Testis (tissue), 5 donors: ENCODE measurements at regions of chr5 and their contacts with region 1.

Region 1: DNA sequence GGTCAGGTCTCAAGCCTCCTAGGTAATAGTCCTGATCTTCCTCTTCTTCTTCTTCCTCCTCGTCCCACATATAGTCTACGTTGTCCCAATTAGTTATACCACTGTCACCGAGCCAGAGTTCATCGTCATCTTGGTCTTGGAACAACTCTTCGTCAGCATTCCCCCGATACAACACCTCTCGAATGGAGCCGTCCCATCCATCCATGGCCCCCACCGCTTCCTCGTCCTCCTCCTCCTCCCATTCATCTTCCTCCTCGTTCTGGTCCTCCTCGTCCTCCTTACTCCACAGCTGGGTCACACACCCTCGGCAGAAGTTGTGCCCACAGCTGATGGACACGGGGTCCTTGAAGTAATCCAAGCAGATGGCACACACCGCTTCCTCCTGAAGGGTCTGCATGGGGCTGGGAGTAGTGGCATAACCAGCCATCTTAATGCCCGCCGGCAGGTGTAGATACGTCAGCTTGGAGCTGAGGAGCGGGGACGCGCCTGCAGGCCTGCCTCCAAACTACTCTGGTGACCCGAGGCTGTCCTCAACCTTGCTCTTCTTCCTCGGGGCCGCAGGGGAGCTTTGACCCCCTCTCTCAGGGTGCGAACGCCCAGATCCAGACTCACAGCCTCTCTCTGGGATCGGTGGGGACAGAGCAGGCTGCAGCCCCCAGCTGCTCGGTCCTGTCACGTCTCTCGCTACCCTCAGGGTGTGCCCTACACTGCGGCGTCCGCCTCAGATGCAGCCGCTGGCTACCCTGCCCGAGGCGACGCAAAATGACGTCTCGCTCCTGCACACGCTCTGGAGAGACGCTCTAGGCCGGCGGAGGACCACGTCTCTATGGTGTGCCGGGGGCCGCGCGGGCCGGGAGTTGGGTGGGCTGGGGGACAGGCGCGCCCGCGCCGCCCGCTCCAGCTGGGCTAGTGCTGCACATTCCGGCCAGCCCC is at the start of gene TRIM52:
- DNase-seq: peak; percentile 96
- H3K4me3 ChIP-seq: peak within 1 kb of the TSS; percentile 99 to 100
- H3K27ac ChIP-seq: peak within 1 kb of the TSS; percentile 99
- H3K4me1 ChIP-seq: peaks cover 14% of the 10 kb centered on the region
- H3K27me3 ChIP-seq: no peaks in the 10 kb centered on the region
- CTCF ChIP-seq: no peak
- POLR2A ChIP-seq: peak; percentile 40
- total RNA-seq, gene TRIM52: 28.4 to 32.8 TPM

Region 2: DNA sequence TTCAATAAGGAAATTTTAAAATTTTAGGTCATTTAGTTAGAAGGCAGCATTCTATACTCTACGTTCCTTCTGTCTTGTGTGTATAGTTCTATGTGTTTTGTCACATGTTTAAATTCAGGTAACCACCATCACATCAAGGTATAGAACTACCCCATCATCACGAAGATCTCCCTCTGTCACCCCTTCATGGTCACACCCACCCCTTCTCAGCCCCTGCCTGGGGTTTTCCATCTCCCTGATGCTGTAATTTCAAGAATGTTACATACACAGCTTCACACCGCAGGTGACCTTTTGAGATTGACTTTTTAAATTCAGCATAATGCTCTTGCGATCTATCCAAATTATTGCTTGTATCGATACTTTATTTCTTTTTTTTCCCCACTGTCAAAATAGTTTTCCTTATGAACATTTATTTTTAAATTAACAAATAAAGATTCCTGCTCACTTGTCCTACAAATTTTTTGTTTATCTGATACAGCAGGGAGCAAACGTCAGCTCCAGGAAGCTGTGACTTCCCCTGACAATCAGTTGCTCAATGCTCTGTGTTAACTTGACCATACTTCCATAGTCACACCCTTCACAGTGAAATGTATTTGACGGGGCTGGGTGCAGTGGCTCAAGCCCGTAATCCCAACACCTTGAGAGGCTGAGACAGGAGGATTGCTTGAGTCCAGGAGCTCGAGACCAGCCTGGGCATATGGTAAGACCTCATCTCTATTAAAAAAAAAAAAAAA is 351.5 kb before region 1 on chr5:
- intact Hi-C with region 1: no loop called
- DNase-seq: no peak
- H3K4me3 ChIP-seq: no peak overlapping the region
- H3K27ac ChIP-seq: no peak overlapping the region
- H3K4me1 ChIP-seq: no peaks in the 10 kb centered on the region
- H3K27me3 ChIP-seq: no peaks in the 10 kb centered on the region
- CTCF ChIP-seq: no peak
- POLR2A ChIP-seq: no peak

Region 3: DNA sequence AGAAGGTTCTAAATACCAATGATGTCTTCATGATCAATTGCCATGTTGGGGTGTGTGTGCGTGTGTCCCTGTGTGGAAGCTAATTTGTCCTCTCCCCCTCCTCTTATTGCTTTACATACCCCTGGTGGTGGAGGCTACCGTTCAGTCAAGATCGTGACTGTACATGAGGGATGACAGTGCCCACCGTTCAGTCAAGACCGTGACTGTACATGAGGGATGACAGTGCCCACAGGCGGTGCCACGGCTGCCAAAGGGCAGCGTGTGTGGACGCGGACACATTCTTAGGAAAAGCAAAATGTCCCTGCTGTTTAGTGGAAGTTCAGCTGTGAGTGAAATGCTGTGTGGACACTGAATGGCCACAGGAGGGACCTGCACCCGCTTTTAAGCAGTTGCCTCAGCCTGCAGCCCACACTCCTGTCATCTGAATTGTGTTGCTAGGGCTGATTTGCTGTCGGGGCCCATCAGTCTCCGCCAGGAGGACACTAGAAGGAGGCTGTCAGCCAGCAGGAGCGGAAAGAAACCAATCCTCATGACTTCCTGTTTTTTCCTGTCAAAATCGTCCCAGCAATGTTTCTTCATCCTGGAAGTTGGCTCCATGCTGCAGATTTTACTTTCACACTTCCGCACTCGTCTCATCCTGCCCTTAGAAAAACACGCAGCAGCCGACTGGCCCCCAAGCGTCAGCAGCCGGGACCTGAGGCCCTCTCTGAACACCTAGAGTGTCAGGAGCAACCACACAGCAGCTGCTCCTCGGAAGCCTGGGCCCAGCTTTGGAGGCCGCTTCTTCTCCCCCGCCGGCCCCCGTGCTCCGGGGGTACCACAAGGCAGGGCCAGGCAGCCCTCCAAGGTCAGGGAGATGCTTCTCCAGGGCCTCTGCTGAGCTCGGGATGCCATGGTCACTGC is 138.7 kb before region 1 on chr5:
- intact Hi-C with region 1: no loop called
- DNase-seq: no peak
- H3K4me3 ChIP-seq: no peak overlapping the region
- H3K27ac ChIP-seq: no peak overlapping the region
- H3K4me1 ChIP-seq: no peaks in the 10 kb centered on the region
- H3K27me3 ChIP-seq: no peaks in the 10 kb centered on the region
- CTCF ChIP-seq: no peak
- POLR2A ChIP-seq: no peak

Region 4: DNA sequence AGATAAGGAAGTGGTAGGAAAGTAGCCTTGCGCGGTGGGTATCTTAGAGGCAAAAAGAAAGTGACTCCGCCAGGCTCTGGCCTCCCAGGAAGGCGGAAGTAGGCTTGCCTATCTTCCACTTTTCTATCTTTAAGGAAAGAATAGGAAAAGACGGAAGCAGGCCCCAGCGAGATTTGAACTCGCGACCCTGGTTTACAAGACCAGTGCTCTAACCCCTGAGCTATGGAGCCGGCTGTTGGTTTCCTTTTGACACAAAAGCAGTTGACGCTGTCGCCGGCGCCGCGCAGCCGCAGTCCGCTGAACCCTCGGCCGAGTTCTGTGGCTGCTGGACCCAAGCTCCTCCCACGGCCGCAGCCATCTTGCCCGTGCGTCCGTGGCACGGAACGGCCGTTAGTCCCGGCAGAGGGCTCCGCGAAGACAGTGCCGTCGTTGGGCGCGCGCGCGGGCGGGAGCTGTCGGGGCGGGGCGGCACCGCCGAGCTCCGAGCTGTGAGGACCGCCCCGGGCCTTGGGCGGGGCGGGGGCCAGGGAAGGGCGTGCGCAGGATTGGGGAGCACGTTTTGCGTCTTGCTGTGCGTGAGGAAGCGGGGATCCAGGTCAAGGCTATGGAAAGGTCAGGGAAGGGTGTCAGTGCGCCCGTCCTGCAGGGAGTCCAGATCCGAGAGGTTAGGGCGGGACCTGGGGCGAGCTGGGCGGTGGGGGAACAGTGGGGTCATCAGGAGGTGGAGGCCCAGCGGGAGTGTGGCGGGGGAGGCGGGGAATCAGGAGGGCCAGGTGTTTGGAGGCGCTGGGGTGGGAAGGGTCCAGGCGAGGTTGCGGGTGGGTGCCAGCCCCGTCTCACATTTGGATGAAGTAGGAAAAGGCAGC is 68.9 kb before region 1 on chr5:
- intact Hi-C with region 1: loop called (anchors 5 kb)
- DNase-seq: peak; percentile 96
- H3K4me3 ChIP-seq: peak overlapping the region; percentile 82 to 87
- H3K27ac ChIP-seq: peak overlapping the region; percentile 87 to 94
- H3K4me1 ChIP-seq: peaks cover 6% of the 10 kb centered on the region
- H3K27me3 ChIP-seq: no peaks in the 10 kb centered on the region
- CTCF ChIP-seq: no peak
- POLR2A ChIP-seq: no peak